A549 (cell line): ENCODE measurements at regions of chr11 and their contacts with region 1.

Region 1: DNA sequence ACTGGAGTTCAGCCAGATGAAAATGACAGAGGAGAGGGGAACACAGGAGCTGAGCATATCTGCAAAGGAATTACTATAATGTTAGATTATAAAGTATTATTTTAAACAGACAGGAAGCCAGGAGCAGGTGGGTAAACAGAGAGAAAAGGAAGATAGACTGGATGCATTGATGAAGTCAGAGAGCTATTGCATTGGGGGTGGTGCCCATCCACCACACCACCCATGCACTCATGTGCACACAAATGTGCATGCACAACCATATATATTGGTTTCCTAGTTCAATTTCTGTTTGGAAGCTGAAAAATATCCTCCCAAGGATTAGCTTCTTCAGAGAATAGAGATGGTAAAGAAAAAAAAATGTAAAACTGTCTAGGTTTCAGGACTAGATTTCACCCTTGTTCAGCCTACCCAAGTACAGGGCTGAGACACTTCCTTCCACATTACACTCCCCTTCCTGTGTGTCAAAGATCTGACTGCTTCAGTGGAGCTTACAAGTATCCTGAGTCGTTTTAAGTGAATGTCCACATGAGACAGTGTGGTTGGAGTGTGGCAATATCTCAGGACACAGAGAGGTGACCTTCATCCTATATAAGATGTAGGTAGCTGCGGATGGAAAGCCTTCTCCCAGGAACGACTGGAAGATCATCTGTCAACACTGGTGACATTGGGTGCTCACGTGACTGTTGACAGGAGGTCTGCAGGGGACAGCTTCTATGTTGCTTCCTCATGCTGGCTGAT is 12.2 kb upstream of the SMPD1 start:
- DNase-seq: no peak
- ATAC-seq: peak; percentile 18 to 42; a peak in 3 of 6 replicates
- H3K4me3 ChIP-seq: no peak overlapping the region
- H3K27ac ChIP-seq: no peak overlapping the region
- H3K4me1 ChIP-seq: 0 out of 3 replicates have a peak, but pooled peaks cover 7% of the 10 kb centered on the region
- CTCF ChIP-seq: no peak
- EP300 ChIP-seq: no peak
- POLR2A ChIP-seq: no peak
- RAD21 ChIP-seq: no peak

Region 2: GRCh38 chr11:6389921-6390724 is 12.1 kb after region 1 on chr11 and contains the start of gene SMPD1:
- CTCF ChIA-PET with region 1: interaction called, 45 read pairs
- POLR2A ChIA-PET with region 1: interaction called, 3 read pairs
- DNase-seq: peak; percentile 82
- ATAC-seq: peak; percentile 90 to 94
- H3K4me3 ChIP-seq: peak within 1 kb of the TSS; percentile 51
- H3K27ac ChIP-seq: peak within 1 kb of the TSS; percentile 77 to 87
- H3K4me1 ChIP-seq: peaks cover 32% of the 10 kb centered on the region
- CTCF ChIP-seq: no peak
- EP300 ChIP-seq: no peak
- POLR2A ChIP-seq: 0 out of 2 replicates have a peak, but pooled peaks have one; percentile 31
- RAD21 ChIP-seq: no peak
- polyA plus RNA-seq, gene SMPD1: 5.1 and 5.5 TPM in 2 replicates

Region 3: DNA sequence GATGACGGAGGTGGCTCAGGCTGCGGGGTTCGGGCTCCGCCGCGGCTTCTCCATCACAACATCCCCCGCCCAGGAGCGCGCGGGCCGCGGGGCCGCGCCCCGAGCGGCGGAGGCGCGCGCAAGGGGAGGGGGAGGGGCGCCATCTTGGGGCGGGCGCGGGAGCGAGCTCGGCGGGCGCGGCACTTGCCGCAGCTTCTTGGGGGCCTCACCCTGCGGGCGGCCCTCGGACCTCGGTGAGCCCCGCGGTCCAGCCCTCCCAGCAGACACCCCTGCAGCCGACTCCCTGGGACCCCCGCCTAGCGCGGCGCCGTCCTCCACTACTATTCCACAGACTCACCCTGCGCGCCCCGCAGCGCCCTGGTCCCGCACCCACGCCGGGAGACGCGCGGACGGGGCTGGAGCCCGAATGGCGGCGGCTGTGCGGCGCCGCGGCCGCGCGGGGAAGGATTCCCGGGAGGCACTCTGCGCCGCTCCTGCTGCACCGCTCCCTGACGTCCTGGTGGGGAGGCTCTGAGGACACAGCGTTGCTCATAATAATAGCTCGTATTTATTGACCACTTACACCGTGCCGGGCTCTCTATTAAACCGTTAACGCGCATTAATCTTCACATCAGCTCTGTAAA is 41.0 kb after region 1 on chr11 and contains the start of gene APBB1:
- CTCF ChIA-PET with region 1: interaction called, 4 read pairs
- POLR2A ChIA-PET with region 1: interaction called, 10 read pairs
- DNase-seq: peak; percentile 44 to 62
- ATAC-seq: peak; percentile 85 to 89
- H3K4me3 ChIP-seq: peak within 1 kb of the TSS; percentile 74
- H3K27ac ChIP-seq: peak within 1 kb of the TSS; percentile 85 to 95
- H3K4me1 ChIP-seq: peaks cover 6% of the 10 kb centered on the region
- CTCF ChIP-seq: no peak
- EP300 ChIP-seq: no peak
- POLR2A ChIP-seq: peak; percentile 60
- RAD21 ChIP-seq: peak in 1 of 2 experiments; percentile 21; a peak in 1 of 5 replicates
- polyA plus RNA-seq, gene APBB1: 13.6 and 17.2 TPM in 2 replicates

Region 4: DNA sequence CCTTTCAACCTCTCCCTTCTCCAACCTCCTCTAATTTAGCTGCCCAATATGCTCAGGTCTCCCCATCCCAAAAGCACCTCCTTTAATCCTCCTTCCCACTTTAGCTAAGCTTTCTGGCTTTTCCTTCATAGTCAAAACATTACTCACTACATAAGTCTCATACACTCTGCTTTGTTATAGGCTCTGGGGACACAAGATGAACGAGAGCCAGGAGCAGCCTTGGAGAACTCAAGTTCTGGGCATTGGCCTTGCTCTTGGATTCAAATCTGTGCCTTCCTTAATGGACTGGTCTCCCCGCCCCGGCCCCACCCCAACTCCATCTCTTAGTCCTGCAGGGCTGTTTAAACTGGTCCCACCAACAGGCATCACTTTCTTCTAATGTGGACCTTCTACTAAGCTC is 74.1 kb after region 1 on chr11:
- CTCF ChIA-PET with region 1: interaction called, 142 read pairs
- POLR2A ChIA-PET with region 1: no interaction called
- DNase-seq: no peak
- ATAC-seq: no peak
- H3K4me3 ChIP-seq: no peak overlapping the region
- H3K27ac ChIP-seq: no peak overlapping the region
- H3K4me1 ChIP-seq: no peaks in the 10 kb centered on the region
- CTCF ChIP-seq: no peak
- EP300 ChIP-seq: no peak
- POLR2A ChIP-seq: no peak
- RAD21 ChIP-seq: no peak

Region 5: DNA sequence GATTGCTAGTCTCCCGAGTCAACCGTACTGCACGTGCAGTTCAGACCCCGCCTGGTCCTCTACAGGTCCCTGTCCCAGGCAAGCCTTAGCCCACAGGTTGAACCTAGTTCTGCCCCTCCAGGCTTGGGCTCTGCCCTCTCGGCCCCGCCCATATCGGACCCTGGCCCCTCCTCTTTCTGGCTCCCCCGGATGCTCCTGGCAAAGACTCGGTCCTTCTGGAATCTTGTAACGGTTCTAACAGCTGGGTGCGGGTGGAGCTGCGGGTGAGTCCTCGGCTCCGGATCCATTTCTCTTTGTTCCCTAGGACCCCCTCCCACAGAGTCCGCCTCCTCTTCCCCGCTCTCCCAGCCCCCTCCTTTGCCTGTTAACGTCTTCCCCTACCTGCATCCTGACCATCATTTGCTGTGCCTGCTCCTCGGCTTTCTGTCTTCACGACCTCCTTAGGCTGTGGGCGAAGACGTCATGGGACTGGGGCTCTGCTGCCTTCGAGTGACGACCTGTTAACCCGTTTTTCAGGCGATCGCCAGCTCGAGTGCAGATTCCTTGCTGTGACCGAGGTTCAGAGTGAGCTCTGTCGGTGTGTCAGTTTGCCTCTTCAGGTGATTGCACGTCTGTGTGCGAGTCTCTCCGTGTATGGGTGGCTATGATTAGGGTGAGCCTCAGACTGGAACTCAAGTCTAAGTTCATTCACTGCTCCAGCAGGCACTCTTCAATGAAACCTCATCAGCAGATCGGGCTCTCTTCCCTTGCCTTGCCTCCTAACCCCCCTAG is 119.2 kb after region 1 on chr11 and contains the start of gene DNHD1:
- CTCF ChIA-PET with region 1: interaction called, 30 read pairs
- POLR2A ChIA-PET with region 1: no interaction called
- DNase-seq: no peak
- ATAC-seq: no peak; a peak in 1 of 6 replicates
- H3K4me3 ChIP-seq: no peak within 1 kb of the TSS
- H3K27ac ChIP-seq: no peak within 1 kb of the TSS
- H3K4me1 ChIP-seq: no peaks in the 10 kb centered on the region
- CTCF ChIP-seq: no peak
- EP300 ChIP-seq: no peak
- POLR2A ChIP-seq: no peak
- RAD21 ChIP-seq: no peak
- polyA plus RNA-seq, gene DNHD1: 8.6 and 12.7 TPM in 2 replicates

Region 6: GRCh38 chr11:6682936-6683861 is 305.1 kb after region 1 on chr11 and contains the start of gene MRPL17:
- CTCF ChIA-PET with region 1: interaction called, 12 read pairs
- POLR2A ChIA-PET with region 1: interaction called, 11 read pairs
- DNase-seq: peak; percentile 97 to 99
- ATAC-seq: peak; percentile 95 to 98
- H3K4me3 ChIP-seq: peak within 1 kb of the TSS; percentile 83
- H3K27ac ChIP-seq: peak within 1 kb of the TSS; percentile 86 to 95
- H3K4me1 ChIP-seq: peaks cover 11% of the 10 kb centered on the region; the same call in 2 of the 3 replicates
- CTCF ChIP-seq: peak; percentile 88
- EP300 ChIP-seq: no peak
- POLR2A ChIP-seq: peak; percentile 98
- RAD21 ChIP-seq: peak; percentile 55 to 76
- polyA plus RNA-seq, gene MRPL17: 96.8 and 107 TPM in 2 replicates

Region 7: DNA sequence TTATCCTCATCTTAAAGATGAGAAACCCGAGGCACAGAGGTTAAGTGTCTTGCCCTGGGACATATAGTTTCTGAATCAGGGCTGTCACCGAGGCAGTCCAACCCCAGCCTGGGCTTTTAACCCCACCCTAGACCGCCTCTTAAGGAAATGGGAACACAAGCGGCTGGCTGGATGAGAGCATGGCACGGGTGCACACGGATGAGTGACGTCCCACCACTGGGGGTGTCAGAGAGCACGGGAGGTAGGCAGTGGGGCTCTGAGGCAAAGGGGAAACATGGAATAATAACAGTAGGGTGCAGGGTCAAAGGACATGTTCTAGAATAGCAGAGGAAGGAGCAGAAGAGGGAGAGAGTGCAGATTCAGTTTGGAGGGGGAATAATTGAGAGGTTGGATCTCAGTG is 1158.0 kb after region 1 on chr11:
- CTCF ChIA-PET with region 1: no interaction called
- POLR2A ChIA-PET with region 1: no interaction called
- DNase-seq: peak; percentile 35 to 60
- ATAC-seq: peak; percentile 86 to 93
- H3K4me3 ChIP-seq: no peak overlapping the region
- H3K27ac ChIP-seq: no peak overlapping the region
- H3K4me1 ChIP-seq: no peaks in the 10 kb centered on the region
- CTCF ChIP-seq: no peak
- EP300 ChIP-seq: no peak
- POLR2A ChIP-seq: no peak
- RAD21 ChIP-seq: no peak